ENCODE measurements at regions of chr11 and their contacts with region 1.

Region 1: GRCh38 chr11:33161120-33162005 is at the start of gene CSTF3:
- DNase-seq: peak; percentile 92
- ATAC-seq: peak; percentile 96
- H3K4me3 Mint-ChIP-seq: peak within 1 kb of the TSS; percentile 99
- H3K27ac Mint-ChIP-seq: peak within 1 kb of the TSS; percentile 95
- H3K4me1 Mint-ChIP-seq: peaks cover 44% of the 10 kb centered on the region
- H3K27me3 Mint-ChIP-seq: no peaks in the 10 kb centered on the region
- CTCF ChIP-seq: no peak
- total RNA-seq, gene CSTF3: 30.0 and 33.5 TPM in 2 replicates

Region 2: GRCh38 chr11:32893343-32894148 is 267.8 kb before region 1 on chr11:
- CTCF ChIA-PET with region 1: no interaction called
- POLR2A ChIA-PET with region 1: interaction called, 9 read pairs
- intact Hi-C with region 1: loop called (anchors 2 kb)
- DNase-seq: peak; percentile 65
- ATAC-seq: peak; percentile 51
- H3K4me3 Mint-ChIP-seq: peak overlapping the region; percentile 94
- H3K27ac Mint-ChIP-seq: peak overlapping the region; percentile 82
- H3K4me1 Mint-ChIP-seq: peaks cover 30% of the 10 kb centered on the region
- H3K27me3 Mint-ChIP-seq: no peaks in the 10 kb centered on the region
- CTCF ChIP-seq: no peak

Region 3: DNA sequence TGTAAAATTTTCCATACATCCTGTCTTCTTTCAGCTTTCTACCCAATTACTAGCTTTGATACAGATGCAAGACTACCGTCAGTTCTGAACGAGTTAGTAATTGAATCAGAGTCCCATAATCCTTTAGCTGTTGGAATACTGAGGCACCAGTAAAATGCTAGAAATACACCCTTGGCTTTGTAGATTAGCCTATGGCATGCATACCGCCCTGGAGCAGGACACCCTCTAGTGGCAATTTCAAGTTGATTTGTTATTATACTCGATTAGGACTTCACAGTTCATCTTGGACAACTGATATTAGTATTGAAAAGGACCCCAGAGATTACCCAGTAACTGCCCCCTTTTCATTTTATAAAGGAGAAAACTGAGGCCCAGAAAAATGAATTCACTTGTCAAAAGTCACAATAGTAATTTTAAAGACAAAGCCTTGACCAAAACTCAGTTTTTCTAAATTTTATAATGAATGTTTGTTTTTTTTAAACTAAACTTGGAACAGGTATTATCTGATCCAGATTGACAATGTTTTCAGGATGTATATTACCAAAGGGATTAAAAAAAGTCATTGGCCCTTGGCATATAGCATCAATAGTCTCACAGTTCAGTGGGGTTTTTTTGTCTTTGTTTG is 168.5 kb after region 1 on chr11:
- CTCF ChIA-PET with region 1: interaction called, 36 read pairs
- POLR2A ChIA-PET with region 1: no interaction called
- intact Hi-C with region 1: loop called (anchors 1 kb)
- DNase-seq: no peak
- ATAC-seq: peak; percentile 65
- H3K4me3 Mint-ChIP-seq: no peak overlapping the region
- H3K27ac Mint-ChIP-seq: no peak overlapping the region
- H3K4me1 Mint-ChIP-seq: peaks cover 14% of the 10 kb centered on the region
- H3K27me3 Mint-ChIP-seq: no peaks in the 10 kb centered on the region
- CTCF ChIP-seq: no peak

Region 4: DNA sequence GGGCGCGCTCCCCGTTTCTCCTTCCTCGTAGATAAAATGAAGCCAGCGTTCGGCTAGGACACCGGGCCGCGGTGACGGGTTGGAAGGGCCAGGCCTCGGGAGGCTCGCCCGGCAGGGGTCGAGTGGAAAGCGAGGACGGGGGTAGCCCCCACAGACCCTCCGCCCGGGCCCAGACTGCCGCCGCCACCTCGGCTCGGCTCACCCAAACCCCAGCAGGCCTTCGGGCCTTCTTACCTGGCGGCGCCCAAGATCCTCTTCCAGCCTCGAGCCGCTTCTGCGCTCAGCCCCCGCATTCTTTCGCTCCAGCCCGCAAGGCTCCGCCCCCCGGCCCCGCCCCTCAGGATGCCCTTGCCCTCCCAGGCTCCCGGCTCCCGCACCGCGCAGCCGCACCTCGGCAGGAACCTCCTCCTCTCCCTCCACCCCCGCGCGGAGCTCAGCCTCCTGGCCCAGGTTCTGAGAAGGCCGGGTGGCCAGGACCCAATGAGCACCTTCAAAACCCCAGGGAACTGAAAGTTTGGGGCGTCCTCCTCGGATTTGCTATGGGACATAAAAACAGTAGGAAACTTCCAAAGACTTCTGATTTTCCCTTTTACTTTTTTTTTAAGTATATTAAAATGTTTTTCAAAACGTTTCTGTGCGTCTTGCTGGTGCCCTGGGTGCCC is 574.9 kb after region 1 on chr11 and contains the start of gene CD59:
- CTCF ChIA-PET with region 1: no interaction called
- POLR2A ChIA-PET with region 1: no interaction called
- intact Hi-C with region 1: loop called (anchors 2 kb)
- DNase-seq: peak; percentile 82
- ATAC-seq: peak; percentile 81
- H3K4me3 Mint-ChIP-seq: peak within 1 kb of the TSS; percentile 88
- H3K27ac Mint-ChIP-seq: peak within 1 kb of the TSS; percentile 81
- H3K4me1 Mint-ChIP-seq: peaks cover 39% of the 10 kb centered on the region
- H3K27me3 Mint-ChIP-seq: no peaks in the 10 kb centered on the region
- CTCF ChIP-seq: no peak
- total RNA-seq, gene CD59: 92.9 and 94.1 TPM in 2 replicates

Region 5: GRCh38 chr11:34105079-34105956 is 944.0 kb after region 1 on chr11 and contains the start of gene NAT10:
- CTCF ChIA-PET with region 1: no interaction called
- POLR2A ChIA-PET with region 1: no interaction called
- intact Hi-C with region 1: loop called (anchors 1 kb)
- DNase-seq: peak; percentile 91
- ATAC-seq: peak; percentile 92
- H3K4me3 Mint-ChIP-seq: peak within 1 kb of the TSS; percentile 97
- H3K27ac Mint-ChIP-seq: peak within 1 kb of the TSS; percentile 98
- H3K4me1 Mint-ChIP-seq: peaks cover 41% of the 10 kb centered on the region
- H3K27me3 Mint-ChIP-seq: peaks cover 2% of the 10 kb centered on the region
- CTCF ChIP-seq: no peak
- total RNA-seq, gene NAT10: 107 and 120 TPM in 2 replicates

Measured in activated B cell treated with CpG ODN at 0.5 μM for 24 hours (primary cell).